ENCODE measurements at regions of chr7 and their contacts with region 1.

Region 1: GRCh38 chr7:116588641-116589594 is 64.1 kb downstream of the CAV1 start:
- DNase-seq: peak in 5 of 9 donors; percentile 22 to 40 (median 32)
- ATAC-seq: peak; percentile 69
- H3K4me3 ChIP-seq: no peak overlapping the region
- H3K4me3 Mint-ChIP-seq: no peak overlapping the region
- H3K27ac ChIP-seq: no peak overlapping the region
- H3K27ac Mint-ChIP-seq: no peak overlapping the region
- H3K4me1 ChIP-seq: no peaks in the 10 kb centered on the region
- H3K4me1 Mint-ChIP-seq: peaks cover 15 to 27% (median 19%) of the 10 kb centered on the region in 7 donors
- H3K27me3 ChIP-seq: no peaks in the 10 kb centered on the region
- H3K27me3 Mint-ChIP-seq: peaks cover 22 to 32% (median 26%) of the 10 kb centered on the region in 5 donors

Region 2: DNA sequence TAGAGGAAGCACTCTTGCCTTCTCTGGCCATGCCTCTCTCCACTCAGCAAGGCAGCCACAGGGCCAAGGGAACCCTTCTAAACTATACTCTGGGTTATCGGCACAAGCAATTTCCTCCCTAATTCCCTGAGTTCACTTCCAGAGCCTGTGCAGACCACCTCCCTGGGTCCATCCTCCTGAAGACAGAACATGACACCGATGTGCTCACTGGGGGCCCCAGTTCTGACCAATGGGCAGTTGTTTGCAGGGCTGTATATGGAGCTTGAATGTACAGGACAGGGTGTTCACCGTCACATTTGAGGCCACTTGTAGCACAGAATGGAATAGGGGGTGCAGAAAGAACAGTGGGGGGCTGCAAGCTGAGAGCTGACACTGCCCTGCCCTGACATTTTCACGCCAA is 636.1 kb before region 1 on chr7:
- CTCF ChIA-PET with region 1: no interaction called
- POLR2A ChIA-PET with region 1: no interaction called
- intact Hi-C with region 1: no loop called
- DNase-seq: no peak
- ATAC-seq: no peak
- H3K4me3 ChIP-seq: no peak overlapping the region
- H3K4me3 Mint-ChIP-seq: no peak overlapping the region
- H3K27ac ChIP-seq: no peak overlapping the region
- H3K27ac Mint-ChIP-seq: no peak overlapping the region
- H3K4me1 ChIP-seq: no peaks in the 10 kb centered on the region
- H3K4me1 Mint-ChIP-seq: no peaks in the 10 kb centered on the region
- H3K27me3 ChIP-seq: no peaks in the 10 kb centered on the region
- H3K27me3 Mint-ChIP-seq: no peaks in the 10 kb centered on the region

Region 3: GRCh38 chr7:116138202-116138801 is 450.6 kb before region 1 on chr7:
- CTCF ChIA-PET with region 1: interaction called, 4 read pairs
- POLR2A ChIA-PET with region 1: no interaction called
- intact Hi-C with region 1: loop called (anchors 1 kb)
- DNase-seq: peak in 5 of 9 donors; percentile 22 to 42 (median 27)
- ATAC-seq: peak; percentile 89
- H3K4me3 ChIP-seq: no peak overlapping the region
- H3K4me3 Mint-ChIP-seq: no peak overlapping the region
- H3K27ac ChIP-seq: no peak overlapping the region
- H3K27ac Mint-ChIP-seq: no peak overlapping the region
- H3K4me1 ChIP-seq: no peaks in the 10 kb centered on the region
- H3K4me1 Mint-ChIP-seq: peaks cover 0 to 18% (median 8%) of the 10 kb centered on the region in 7 donors
- H3K27me3 ChIP-seq: peaks cover 0 to 2% of the 10 kb centered on the region in 2 donors
- H3K27me3 Mint-ChIP-seq: peaks cover 0 to 22% (median 10%) of the 10 kb centered on the region in 5 donors

Region 4: GRCh38 chr7:116258734-116259133 is 330.2 kb before region 1 on chr7:
- CTCF ChIA-PET with region 1: interaction called, 25 read pairs
- POLR2A ChIA-PET with region 1: no interaction called
- intact Hi-C with region 1: loop called (anchors 1 kb)
- DNase-seq: peak in 7 of 9 donors; percentile 14 to 45 (median 36)
- ATAC-seq: peak; percentile 82
- H3K4me3 ChIP-seq: no peak overlapping the region
- H3K4me3 Mint-ChIP-seq: no peak overlapping the region
- H3K27ac ChIP-seq: no peak overlapping the region
- H3K27ac Mint-ChIP-seq: peak overlapping the region in 7 of 9 donors; percentile 33 to 79 (median 49)
- H3K4me1 ChIP-seq: no peaks in the 10 kb centered on the region
- H3K4me1 Mint-ChIP-seq: peaks cover 10 to 26% (median 15%) of the 10 kb centered on the region in 7 donors
- H3K27me3 ChIP-seq: no peaks in the 10 kb centered on the region
- H3K27me3 Mint-ChIP-seq: peaks cover 0 to 5% (median 0%) of the 10 kb centered on the region in 5 donors

Region 5: GRCh38 chr7:116726713-116727431 is 138.0 kb after region 1 on chr7:
- CTCF ChIA-PET with region 1: no interaction called
- POLR2A ChIA-PET with region 1: no interaction called
- intact Hi-C with region 1: no loop called
- DNase-seq: no peak
- ATAC-seq: no peak
- H3K4me3 ChIP-seq: no peak overlapping the region
- H3K4me3 Mint-ChIP-seq: no peak overlapping the region
- H3K27ac ChIP-seq: no peak overlapping the region
- H3K27ac Mint-ChIP-seq: no peak overlapping the region
- H3K4me1 ChIP-seq: no peaks in the 10 kb centered on the region
- H3K4me1 Mint-ChIP-seq: no peaks in the 10 kb centered on the region
- H3K27me3 ChIP-seq: no peaks in the 10 kb centered on the region
- H3K27me3 Mint-ChIP-seq: peaks cover 5 to 23% (median 8%) of the 10 kb centered on the region in 5 donors

Region 6: DNA sequence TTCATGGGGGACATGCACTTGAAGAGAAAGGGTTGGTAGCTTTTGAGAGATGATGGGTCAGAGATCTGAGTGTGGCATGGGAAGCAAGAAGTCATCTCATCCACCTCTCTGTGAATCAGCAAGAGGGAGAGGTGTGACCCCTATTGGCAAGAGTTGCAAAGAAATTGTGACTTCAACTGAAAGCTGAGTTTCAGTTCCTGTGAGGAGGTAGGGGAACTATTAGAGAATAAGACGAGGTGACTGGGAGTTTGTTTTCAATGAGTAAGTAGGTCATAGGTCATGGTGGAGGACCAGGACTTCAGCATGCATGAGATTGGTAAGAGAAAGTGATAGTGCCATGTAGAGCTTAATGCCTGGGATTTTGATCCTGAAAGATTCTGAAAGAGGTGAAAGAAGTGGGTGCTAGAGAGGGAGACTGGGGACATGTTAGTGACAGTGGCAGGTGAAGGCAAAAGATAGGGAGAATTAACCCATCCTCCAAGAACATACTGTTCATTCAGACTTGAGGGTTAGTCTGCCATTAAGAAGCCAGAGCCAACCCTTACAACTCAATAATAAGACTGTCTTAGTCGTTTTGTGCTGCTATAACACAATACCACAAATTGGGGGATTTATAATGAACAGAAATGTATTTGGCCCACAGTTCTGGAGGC is 198.0 kb after region 1 on chr7:
- CTCF ChIA-PET with region 1: no interaction called
- POLR2A ChIA-PET with region 1: no interaction called
- intact Hi-C with region 1: loop called in 1 of 2 experiments (anchors 5 kb)
- DNase-seq: no peak
- ATAC-seq: peak; percentile 85
- H3K4me3 ChIP-seq: no peak overlapping the region
- H3K4me3 Mint-ChIP-seq: no peak overlapping the region
- H3K27ac ChIP-seq: no peak overlapping the region
- H3K27ac Mint-ChIP-seq: no peak overlapping the region
- H3K4me1 ChIP-seq: no peaks in the 10 kb centered on the region
- H3K4me1 Mint-ChIP-seq: no peaks in the 10 kb centered on the region
- H3K27me3 ChIP-seq: no peaks in the 10 kb centered on the region
- H3K27me3 Mint-ChIP-seq: peaks cover 0 to 4% (median 0%) of the 10 kb centered on the region in 5 donors

Region 7: GRCh38 chr7:117127585-117128168 is 538.8 kb after region 1 on chr7:
- CTCF ChIA-PET with region 1: no interaction called
- POLR2A ChIA-PET with region 1: no interaction called
- intact Hi-C with region 1: loop called in 1 of 2 experiments (anchors 5 kb)
- DNase-seq: peak in 8 of 9 donors; percentile 9 to 53 (median 44)
- ATAC-seq: peak; percentile 76
- H3K4me3 ChIP-seq: no peak overlapping the region
- H3K4me3 Mint-ChIP-seq: no peak overlapping the region
- H3K27ac ChIP-seq: no peak overlapping the region
- H3K27ac Mint-ChIP-seq: no peak overlapping the region
- H3K4me1 ChIP-seq: no peaks in the 10 kb centered on the region
- H3K4me1 Mint-ChIP-seq: no peaks in the 10 kb centered on the region
- H3K27me3 ChIP-seq: no peaks in the 10 kb centered on the region
- H3K27me3 Mint-ChIP-seq: peaks cover 0 to 11% (median 0%) of the 10 kb centered on the region in 5 donors